ENCODE measurements at regions of chr10 and their contacts with region 1.

Region 1: DNA sequence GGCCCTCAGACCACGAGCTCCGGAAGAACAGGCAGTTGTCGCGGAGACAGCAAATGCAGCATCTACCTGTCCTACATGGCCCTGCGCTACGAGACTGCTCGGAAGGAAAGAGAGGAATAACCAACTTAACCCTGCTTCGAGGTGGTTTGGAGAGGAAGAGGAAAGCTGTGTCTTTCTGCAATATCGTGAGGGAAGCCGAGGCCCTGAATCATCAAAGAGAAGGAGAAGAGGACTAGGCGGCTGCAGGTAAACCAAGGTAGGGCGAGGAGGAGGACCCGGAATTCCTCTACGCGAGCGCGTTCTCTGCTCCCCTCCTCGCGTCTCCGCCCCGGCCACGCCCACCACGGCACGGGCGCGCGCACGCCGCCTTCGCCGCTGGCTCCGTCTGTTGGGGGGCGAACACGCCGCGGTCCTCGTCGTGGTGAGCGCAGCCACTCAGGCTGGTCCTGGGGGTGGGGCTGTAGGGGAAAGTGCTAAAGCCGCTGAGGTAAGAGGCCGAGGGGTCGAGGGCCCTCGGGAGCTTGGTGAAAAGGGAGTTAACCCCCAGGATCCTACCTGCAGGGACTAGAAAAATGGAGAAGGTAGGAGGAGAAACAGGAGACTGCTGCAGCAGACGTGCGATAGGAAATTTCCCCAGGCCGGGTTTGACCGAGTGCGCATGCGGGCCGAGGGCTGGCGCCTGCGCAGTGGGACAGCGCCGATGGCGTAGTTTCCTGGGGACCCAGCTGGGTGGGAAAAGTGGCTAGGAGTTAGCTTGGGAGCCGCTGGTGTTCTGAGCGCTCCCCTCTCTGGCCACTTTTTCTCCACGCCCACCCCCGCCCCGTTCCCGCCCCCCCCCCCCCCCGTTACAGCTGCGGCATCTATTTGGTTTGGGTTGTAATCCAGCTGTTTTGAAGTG is at the starts of genes ANAPC16 and ASCC1:
- DNase-seq: peak; percentile 93
- H3K4me3 Mint-ChIP-seq: peak within 1 kb of the TSS; percentile 94
- H3K27ac Mint-ChIP-seq: peak within 1 kb of the TSS; percentile 99
- H3K4me1 Mint-ChIP-seq: peaks cover 32% of the 10 kb centered on the region
- H3K27me3 Mint-ChIP-seq: no peaks in the 10 kb centered on the region
- total RNA-seq, gene ANAPC16: 94.1 and 95.9 TPM in 2 replicates
- total RNA-seq, gene ASCC1: 46.2 and 49.6 TPM in 2 replicates

Region 2: DNA sequence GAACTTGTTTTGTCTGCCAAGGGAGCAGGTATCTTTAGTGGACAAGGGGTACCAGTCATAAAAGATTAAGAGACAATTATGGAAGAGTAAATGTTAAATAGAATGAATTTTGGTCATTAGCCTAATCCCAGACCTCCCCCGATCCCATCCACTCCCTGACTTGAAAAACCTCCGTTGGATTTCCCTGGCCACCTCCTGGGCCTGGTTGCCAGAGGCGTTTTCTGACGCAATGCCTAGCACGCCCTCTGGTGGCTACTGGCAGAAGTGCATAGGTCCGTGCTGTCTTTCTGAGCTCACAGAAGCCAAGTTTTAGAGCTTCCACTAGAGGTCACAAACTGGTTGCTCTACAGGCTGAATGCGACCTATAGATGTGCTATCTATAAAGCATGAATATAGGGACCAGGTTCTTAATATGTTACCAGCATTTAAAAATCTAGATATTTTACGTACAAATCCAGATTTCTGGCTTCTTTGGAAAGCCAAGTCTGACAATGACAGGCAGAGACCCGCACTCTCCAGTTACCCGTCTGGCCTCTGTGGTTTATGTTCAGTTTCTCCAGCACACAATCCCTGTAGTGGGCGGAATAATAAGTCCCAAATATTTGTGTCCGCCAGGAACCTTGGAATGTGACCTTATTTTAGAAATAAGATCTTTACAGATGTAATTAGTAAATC is 167.3 kb before region 1 on chr10:
- intact Hi-C with region 1: loop called (anchors 5 kb)
- DNase-seq: peak; percentile 79
- H3K4me3 Mint-ChIP-seq: no peak overlapping the region
- H3K27ac Mint-ChIP-seq: peak overlapping the region; percentile 7
- H3K4me1 Mint-ChIP-seq: peaks cover 18% of the 10 kb centered on the region
- H3K27me3 Mint-ChIP-seq: no peaks in the 10 kb centered on the region

Region 3: DNA sequence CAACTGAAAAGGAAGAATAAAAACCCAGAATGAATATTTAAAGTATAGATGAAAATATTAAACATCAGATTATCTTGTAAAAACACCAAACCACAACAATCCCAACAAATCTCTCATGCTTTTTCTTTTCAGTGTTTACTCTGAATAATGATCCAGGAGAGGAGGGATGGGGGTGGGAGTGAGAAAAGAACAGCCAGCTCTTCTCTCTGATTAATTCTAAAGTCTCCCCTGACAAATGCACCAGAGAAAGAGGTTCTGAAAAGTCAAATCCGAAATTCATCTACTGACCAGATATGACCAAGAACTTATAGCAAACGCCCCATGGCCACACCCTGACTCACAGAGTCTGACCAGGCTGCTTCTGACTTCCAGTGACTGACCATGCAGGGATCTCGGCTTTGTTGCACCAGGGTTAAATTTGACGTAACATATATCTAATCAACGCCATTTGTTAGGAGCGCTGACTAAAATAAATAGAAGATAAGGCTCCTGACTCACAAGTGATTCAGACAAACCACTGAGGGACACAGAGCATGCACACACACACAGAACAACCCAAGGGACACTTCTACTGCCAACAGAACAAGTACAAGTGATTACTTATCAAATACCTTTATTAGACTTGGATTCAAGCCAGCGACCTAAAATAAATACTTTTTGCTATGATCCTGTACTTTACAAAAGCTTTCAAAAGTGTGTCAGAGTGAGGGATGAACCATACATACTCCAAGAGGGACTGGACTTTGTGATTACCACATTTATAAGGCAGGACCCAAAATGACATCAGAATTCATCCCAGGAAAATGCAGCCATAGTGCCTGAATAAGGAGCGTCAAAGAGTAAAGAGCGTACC is 118.2 kb before region 1 on chr10:
- intact Hi-C with region 1: no loop called
- DNase-seq: no peak
- H3K4me3 Mint-ChIP-seq: peak overlapping the region; percentile 22
- H3K27ac Mint-ChIP-seq: peak overlapping the region; percentile 86
- H3K4me1 Mint-ChIP-seq: peaks cover 59% of the 10 kb centered on the region
- H3K27me3 Mint-ChIP-seq: no peaks in the 10 kb centered on the region

Region 4: DNA sequence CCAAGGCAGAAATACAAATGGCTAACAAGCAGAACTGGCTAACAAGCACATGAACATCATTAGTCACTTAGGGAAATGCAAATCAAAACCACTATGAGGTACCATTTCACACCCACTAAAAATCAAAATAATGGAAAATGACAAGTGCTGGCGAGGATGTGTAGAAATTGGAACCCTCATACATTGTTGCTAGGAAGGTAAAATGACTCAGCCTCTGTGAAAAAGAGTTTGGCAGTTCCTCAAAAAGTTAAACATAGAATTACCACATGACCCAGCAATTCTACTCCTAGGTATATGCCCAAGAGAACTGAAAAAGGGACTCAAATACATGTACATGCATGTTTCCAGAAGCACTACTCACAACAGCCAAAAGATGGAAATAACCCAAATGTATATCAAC is 52.9 kb before region 1 on chr10:
- intact Hi-C with region 1: loop called (anchors 2 kb)
- DNase-seq: no peak
- H3K4me3 Mint-ChIP-seq: no peak overlapping the region
- H3K27ac Mint-ChIP-seq: peak overlapping the region; percentile 76
- H3K4me1 Mint-ChIP-seq: peaks cover 28% of the 10 kb centered on the region
- H3K27me3 Mint-ChIP-seq: no peaks in the 10 kb centered on the region

Region 5: GRCh38 chr10:72260588-72261322 is 44.9 kb after region 1 on chr10:
- intact Hi-C with region 1: loop called (anchors 1 kb)
- DNase-seq: peak; percentile 85
- H3K4me3 Mint-ChIP-seq: peak overlapping the region; percentile 82
- H3K27ac Mint-ChIP-seq: peak overlapping the region; percentile 97
- H3K4me1 Mint-ChIP-seq: peaks cover 51% of the 10 kb centered on the region
- H3K27me3 Mint-ChIP-seq: no peaks in the 10 kb centered on the region

Region 6: GRCh38 chr10:72297968-72298773 is 82.3 kb after region 1 on chr10:
- intact Hi-C with region 1: loop called (anchors 1 kb)
- DNase-seq: peak; percentile 91
- H3K4me3 Mint-ChIP-seq: peak overlapping the region; percentile 76
- H3K27ac Mint-ChIP-seq: peak overlapping the region; percentile 98
- H3K4me1 Mint-ChIP-seq: peaks cover 50% of the 10 kb centered on the region
- H3K27me3 Mint-ChIP-seq: no peaks in the 10 kb centered on the region

Measured in activated T-helper 2 cell treated with anti-CD3 and anti-CD28 coated beads, Interferon-gamma antibody, Interleukin-2, Interleukin-4, amounts not matched to agents 10 μg/mL and 5 μg/mL and 100 μg/mL, durations not matched to agents 14 hours and 24 hours and 36 hours (primary cell).